T-cell (primary cell): ENCODE measurements at regions of chr13 and their contacts with region 1.

Region 1: DNA sequence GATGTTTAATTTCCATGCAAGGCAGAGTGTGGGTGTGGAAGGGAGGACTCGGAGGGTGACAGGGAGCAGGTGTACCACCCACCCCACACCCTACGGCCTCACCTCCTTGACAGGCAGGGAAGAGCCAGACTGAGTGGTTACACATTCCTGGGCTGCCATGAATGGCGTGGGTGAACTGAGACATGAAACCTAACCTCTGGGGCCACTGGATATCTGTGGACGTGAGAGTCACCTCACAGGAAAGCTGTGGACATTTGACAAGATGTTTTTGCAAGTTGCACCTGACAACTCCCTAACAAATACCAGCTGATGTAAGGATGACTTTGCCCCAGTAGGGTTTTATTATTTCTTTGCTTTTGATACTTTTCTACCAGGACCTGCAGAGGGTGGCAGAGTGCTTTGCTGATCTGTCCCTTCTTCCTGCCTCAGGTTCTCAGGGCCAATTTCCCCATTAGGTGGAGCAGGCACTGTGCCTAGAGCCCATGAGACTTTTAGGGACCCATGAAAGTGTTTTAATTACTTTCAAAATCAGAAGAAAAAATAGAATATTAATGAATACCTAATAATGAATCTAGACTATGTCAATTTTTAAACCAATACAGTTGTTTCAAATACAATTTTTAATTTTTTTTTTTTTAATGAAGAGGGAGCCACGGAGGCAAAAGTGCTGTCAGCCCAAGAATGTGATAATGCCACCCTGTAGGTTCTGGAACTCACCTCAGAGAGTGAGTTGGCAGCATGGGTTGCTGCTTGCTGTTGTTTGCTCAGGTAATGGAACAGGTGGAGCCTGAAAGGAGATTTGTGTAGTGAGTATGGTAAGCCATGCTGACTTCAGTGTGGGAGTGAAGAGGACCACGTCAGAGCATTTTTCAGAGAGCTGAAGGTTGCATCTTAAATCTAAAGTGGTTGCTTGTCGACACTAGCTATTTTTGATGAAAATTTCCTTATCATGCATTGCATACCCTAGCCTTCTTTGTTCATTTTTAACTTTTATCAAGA is 58.0 kb upstream of the CYSLTR2 start:
- DNase-seq: peak in 34 of 35 experiments; percentile 22 to 81 (median 52)
- ATAC-seq: peak; percentile 83 to 95 (median 87)
- H3K4me3 ChIP-seq: no peak overlapping the region
- H3K4me3 Mint-ChIP-seq: no peak overlapping the region
- H3K27ac ChIP-seq: no peak overlapping the region
- H3K27ac Mint-ChIP-seq: no peak overlapping the region
- H3K4me1 ChIP-seq: no peaks in the 10 kb centered on the region
- H3K4me1 Mint-ChIP-seq: no peaks in the 10 kb centered on the region
- H3K27me3 ChIP-seq: no peaks in the 10 kb centered on the region
- H3K27me3 Mint-ChIP-seq: peaks cover 0 to 3% of the 10 kb centered on the region in 2 donors

Region 2: DNA sequence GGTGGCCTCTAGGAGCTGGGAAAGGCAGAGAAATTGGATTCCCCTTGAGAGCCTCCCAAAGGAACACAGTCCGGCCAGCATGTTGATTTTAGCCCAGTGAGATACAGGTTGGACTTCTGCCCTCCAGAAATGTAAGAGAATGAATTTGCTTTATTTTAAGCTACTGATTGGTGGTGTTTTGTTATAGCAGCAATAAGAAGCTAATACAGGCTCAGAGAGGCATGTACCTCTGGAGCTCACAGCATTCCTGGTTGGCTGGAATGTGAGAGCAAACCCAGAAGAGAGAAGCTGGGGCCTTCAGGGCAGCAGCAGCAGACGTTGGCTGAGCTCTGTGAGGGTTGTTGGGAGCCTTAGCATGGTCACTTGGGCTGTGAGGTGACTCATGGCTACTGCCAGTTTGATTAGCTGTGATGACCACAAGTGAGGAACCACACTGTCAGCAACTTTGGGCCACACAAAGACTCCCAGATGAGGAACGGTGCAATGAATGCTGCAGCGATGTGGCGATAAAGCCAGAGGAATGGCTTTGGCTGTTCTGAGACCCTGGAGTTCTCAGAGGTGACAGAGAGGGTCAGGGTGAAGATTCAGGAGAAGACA is 138.1 kb after region 1 on chr13:
- CTCF ChIA-PET with region 1: interaction called, 4 to 12 read pairs
- POLR2A ChIA-PET with region 1: no interaction called
- DNase-seq: no peak
- ATAC-seq: no peak
- H3K4me3 ChIP-seq: no peak overlapping the region
- H3K4me3 Mint-ChIP-seq: no peak overlapping the region
- H3K27ac ChIP-seq: no peak overlapping the region
- H3K27ac Mint-ChIP-seq: no peak overlapping the region
- H3K4me1 ChIP-seq: peaks cover 0 to 5% of the 10 kb centered on the region in 2 experiments
- H3K4me1 Mint-ChIP-seq: peaks cover 8 to 15% (median 14%) of the 10 kb centered on the region in 3 donors
- H3K27me3 ChIP-seq: peaks cover 0 to 8% of the 10 kb centered on the region in 2 experiments
- H3K27me3 Mint-ChIP-seq: peaks cover 0 to 3% of the 10 kb centered on the region in 2 donors